Common myeloid progenitor, CD34-positive (primary cell): ENCODE measurements at regions of chr1 and their contacts with region 1.

Region 1: DNA sequence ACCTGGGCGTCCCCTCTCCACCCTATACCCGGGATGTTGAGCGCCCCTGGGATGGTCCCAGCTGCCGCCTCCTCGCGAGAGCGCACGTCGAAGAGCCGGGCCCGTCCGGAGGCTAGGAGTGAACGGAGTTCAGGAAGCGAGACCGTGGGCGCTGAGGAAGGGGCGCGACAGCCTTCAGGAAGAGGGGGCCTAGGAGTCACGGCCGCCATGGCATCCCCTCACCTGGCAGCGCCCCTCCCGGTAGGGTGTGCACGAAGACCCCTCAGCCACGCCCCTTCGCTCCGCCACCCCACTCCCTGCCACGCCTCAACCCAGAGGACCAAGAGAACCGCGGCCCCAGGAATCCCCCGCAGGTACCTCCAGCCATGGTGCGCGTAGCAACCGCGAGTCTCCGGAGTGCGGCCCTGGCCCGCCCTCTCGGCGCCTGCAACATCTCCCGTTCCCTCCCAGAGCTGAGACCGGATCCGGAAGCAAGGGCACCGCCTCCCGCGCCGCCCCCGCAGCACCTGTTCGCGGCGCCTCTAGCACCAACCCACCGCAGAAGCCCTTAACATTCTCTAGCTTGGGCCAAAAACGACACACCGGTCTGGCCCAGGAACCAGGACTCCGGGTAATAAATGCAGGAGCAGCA is at the start of gene TSTD1:
- DNase-seq: peak; percentile 81 to 96 (median 92)
- H3K4me3 ChIP-seq: peak within 1 kb of the TSS; percentile 60 to 91 (median 75)
- H3K27ac ChIP-seq: peak within 1 kb of the TSS; percentile 25 to 77
- H3K4me1 ChIP-seq: peaks cover 0 to 24% (median 19%) of the 10 kb centered on the region in 4 experiments
- H3K27me3 ChIP-seq: no peaks in the 10 kb centered on the region

Region 2: DNA sequence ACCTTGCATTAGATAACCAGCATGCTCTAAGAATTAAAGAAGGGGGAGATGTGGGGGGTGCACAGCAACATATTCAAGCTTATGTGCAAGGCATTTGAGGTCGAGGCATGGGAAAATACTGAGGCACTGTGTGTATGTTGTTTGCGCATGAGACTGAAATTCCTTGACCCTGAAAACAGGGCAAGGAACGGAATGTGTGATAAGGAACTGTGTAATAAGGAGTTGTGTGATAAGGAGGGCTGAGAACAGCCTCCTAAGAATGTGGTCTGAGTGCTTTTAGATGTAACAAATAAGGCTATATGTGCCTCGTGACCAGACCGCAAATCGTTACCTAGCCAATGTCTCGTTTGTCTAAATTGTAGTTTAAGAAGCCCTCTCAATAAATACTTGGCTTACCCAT is 127.2 kb before region 1 on chr1:
- CTCF ChIA-PET with region 1: no interaction called
- POLR2A ChIA-PET with region 1: no interaction called
- DNase-seq: peak in 1 of 3 donors; percentile 48
- H3K4me3 ChIP-seq: no peak overlapping the region
- H3K27ac ChIP-seq: no peak overlapping the region
- H3K4me1 ChIP-seq: no peaks in the 10 kb centered on the region
- H3K27me3 ChIP-seq: no peaks in the 10 kb centered on the region

Region 3: GRCh38 chr1:160963521-160963920 is 75.1 kb before region 1 on chr1:
- CTCF ChIA-PET with region 1: no interaction called
- POLR2A ChIA-PET with region 1: no interaction called
- DNase-seq: no peak
- H3K4me3 ChIP-seq: no peak overlapping the region
- H3K27ac ChIP-seq: no peak overlapping the region
- H3K4me1 ChIP-seq: no peaks in the 10 kb centered on the region
- H3K27me3 ChIP-seq: no peaks in the 10 kb centered on the region

Region 4: GRCh38 chr1:161006563-161006962 is 32.1 kb before region 1 on chr1:
- CTCF ChIA-PET with region 1: interaction called, 10 read pairs
- POLR2A ChIA-PET with region 1: no interaction called
- DNase-seq: no peak
- H3K4me3 ChIP-seq: no peak overlapping the region
- H3K27ac ChIP-seq: no peak overlapping the region
- H3K4me1 ChIP-seq: peaks cover 0 to 7% (median under 1%) of the 10 kb centered on the region in 4 experiments
- H3K27me3 ChIP-seq: no peaks in the 10 kb centered on the region

Region 5: DNA sequence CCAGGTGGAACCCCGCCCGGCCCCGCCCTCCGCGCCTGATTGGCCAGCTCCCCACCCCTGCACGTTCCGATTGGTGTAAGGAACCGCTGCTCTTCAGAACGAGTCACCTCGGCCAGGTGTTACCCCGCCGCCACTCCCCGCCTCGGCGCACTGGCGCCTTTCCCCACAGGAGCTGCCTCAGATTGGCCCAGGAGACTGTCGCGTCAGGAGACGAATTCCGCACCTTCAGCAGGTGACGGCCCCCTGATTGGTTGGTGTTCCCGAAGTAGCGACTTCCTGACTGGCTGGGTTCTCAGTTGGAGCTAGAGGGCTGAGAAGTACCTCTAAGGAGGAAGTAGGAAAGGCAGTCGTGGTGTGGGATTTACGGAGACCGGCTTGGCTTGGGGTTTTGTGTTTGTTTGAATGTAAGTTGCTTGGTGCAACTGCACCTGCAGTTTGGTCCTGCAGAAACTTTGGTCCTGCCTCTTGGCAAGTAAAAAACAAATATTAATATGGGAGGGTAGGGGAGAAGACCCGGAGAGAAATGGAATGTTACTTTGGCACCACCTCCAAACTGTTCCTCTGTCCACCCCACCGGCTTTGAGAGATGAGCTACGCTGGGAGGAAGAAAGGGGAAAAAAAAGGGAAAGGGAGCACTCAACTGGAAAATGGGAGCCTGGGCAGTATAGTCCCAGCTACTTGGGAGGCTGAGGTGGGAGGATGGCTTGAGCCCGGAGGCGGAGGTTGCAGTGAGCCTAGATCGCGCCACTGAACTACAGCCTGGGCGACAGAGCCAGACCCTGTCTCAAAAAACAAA is 17.3 kb before region 1 on chr1:
- CTCF ChIA-PET with region 1: interaction called, 14 read pairs
- POLR2A ChIA-PET with region 1: interaction called, 5 read pairs
- DNase-seq: peak; percentile 78 to 92 (median 87)
- H3K4me3 ChIP-seq: peak overlapping the region; percentile 71 to 96 (median 83)
- H3K27ac ChIP-seq: peak overlapping the region; percentile 25 to 74
- H3K4me1 ChIP-seq: peaks cover 15 to 43% (median 34%) of the 10 kb centered on the region in 4 experiments
- H3K27me3 ChIP-seq: no peaks in the 10 kb centered on the region